Activated CD4-positive, alpha-beta memory T cell treated with anti-CD3 and anti-CD28 coated beads for 36 hours (primary cell): ENCODE measurements at regions of chrX and their contacts with region 1.

Region 1: GRCh38 chrX:46758906-46759644 is at the start of gene SLC9A7:
- DNase-seq: peak; percentile 87
- H3K4me3 Mint-ChIP-seq: peak within 1 kb of the TSS; percentile 94
- H3K27ac Mint-ChIP-seq: peak within 1 kb of the TSS; percentile 79
- H3K4me1 Mint-ChIP-seq: peaks cover 29% of the 10 kb centered on the region
- H3K27me3 Mint-ChIP-seq: peaks cover 3% of the 10 kb centered on the region
- total RNA-seq, gene SLC9A7: 17.7 to 17.8 TPM

Region 2: GRCh38 chrX:46713672-46714490 is 45.2 kb before region 1 on chrX:
- CTCF ChIA-PET with region 1: no interaction called
- POLR2A ChIA-PET with region 1: no interaction called
- intact Hi-C with region 1: loop called (anchors 5 kb)
- DNase-seq: no peak
- H3K4me3 Mint-ChIP-seq: no peak overlapping the region
- H3K27ac Mint-ChIP-seq: peak overlapping the region; percentile 33
- H3K4me1 Mint-ChIP-seq: peaks cover 65% of the 10 kb centered on the region
- H3K27me3 Mint-ChIP-seq: no peaks in the 10 kb centered on the region

Region 3: DNA sequence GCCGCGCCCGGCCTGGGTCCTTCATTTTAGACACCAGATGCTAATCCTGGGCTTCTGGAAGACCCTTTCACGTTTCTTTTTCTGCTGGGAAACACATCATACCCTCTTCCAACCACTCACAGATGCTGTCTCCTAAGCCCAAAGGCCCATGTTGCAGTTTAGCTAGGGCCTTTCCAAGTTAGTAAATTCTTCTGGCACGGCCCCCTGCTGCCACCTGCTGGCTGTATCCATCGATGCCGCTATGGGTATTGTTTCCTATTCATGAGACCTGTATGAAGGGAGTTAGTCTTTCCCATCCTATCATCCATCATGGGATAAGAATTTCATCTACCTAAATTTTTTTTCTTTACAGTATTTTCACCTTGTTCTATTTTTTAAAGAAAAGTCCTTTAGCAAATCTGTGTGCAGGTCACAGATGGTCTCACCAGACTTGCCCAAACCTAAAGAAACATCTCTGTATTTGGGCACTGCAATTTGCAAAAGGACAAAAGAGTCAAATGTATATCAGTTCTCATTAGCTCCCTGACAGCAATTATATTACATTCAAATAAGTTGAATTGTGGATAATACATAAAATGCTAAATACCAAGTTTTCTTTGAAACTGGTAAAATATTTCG is 37.6 kb after region 1 on chrX:
- CTCF ChIA-PET with region 1: interaction called, 32 read pairs
- POLR2A ChIA-PET with region 1: no interaction called
- intact Hi-C with region 1: loop called (anchors 1 kb)
- DNase-seq: peak; percentile 84
- H3K4me3 Mint-ChIP-seq: no peak overlapping the region
- H3K27ac Mint-ChIP-seq: no peak overlapping the region
- H3K4me1 Mint-ChIP-seq: peaks cover 19% of the 10 kb centered on the region
- H3K27me3 Mint-ChIP-seq: no peaks in the 10 kb centered on the region

Region 4: DNA sequence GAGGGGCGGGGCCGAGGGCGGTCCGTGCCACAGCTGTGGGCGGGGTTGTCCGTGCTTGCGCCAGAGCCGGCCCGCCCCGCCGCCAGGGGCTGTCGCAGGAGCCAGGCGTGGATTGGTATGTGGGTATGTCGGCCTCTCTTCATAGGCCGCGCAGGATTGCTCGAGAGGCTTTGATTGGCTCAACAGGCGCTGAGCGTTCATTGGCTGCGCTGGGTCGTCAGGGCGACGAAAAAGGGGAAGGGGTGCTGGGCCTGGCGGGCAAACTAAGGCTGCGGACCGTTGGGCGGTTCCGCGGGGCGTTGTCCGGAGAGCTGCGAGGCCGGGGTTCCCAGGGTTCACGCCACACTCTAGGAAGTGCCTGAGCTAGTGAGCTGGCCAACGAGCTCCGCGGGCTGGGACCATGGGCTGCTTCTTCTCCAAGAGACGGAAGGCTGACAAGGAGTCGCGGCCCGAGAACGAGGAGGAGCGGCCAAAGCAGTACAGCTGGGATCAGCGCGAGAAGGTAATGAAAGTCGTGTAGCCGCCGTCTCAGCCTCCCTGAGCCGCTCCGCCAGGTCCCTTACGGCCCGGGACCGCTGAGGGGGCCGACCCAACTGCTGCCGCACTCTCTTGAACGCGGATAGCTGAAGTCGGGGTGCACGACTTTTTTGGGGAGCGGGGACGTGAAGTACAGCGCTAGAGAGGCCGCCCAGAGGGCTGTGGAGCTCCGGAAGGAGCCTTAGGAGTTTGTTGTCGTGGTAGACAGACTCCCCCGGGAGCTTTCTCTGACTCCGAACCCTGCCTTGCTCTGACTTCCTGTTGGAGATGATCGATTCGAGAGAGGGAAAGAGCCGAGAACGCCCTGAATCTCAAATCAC is 77.9 kb after region 1 on chrX and contains the start of gene RP2:
- CTCF ChIA-PET with region 1: interaction called, 3 read pairs
- POLR2A ChIA-PET with region 1: interaction called, 4 read pairs
- intact Hi-C with region 1: loop called (anchors 2 kb)
- DNase-seq: peak; percentile 90
- H3K4me3 Mint-ChIP-seq: peak within 1 kb of the TSS; percentile 97
- H3K27ac Mint-ChIP-seq: peak within 1 kb of the TSS; percentile 92
- H3K4me1 Mint-ChIP-seq: peaks cover 15% of the 10 kb centered on the region
- H3K27me3 Mint-ChIP-seq: no peaks in the 10 kb centered on the region
- total RNA-seq, gene RP2: 5.0 to 5.5 TPM

Region 5: GRCh38 chrX:46865281-46865680 is 106.2 kb after region 1 on chrX:
- CTCF ChIA-PET with region 1: no interaction called
- POLR2A ChIA-PET with region 1: no interaction called
- intact Hi-C with region 1: no loop called
- DNase-seq: no peak
- H3K4me3 Mint-ChIP-seq: no peak overlapping the region
- H3K27ac Mint-ChIP-seq: no peak overlapping the region
- H3K4me1 Mint-ChIP-seq: no peaks in the 10 kb centered on the region
- H3K27me3 Mint-ChIP-seq: no peaks in the 10 kb centered on the region

Region 6: GRCh38 chrX:47093248-47093647 is 334.2 kb after region 1 on chrX:
- CTCF ChIA-PET with region 1: no interaction called
- POLR2A ChIA-PET with region 1: no interaction called
- intact Hi-C with region 1: loop called (anchors 1 kb)
- DNase-seq: no peak
- H3K4me3 Mint-ChIP-seq: no peak overlapping the region
- H3K27ac Mint-ChIP-seq: no peak overlapping the region
- H3K4me1 Mint-ChIP-seq: peaks cover 8% of the 10 kb centered on the region
- H3K27me3 Mint-ChIP-seq: no peaks in the 10 kb centered on the region